ENCODE measurements at regions of chr13 and their contacts with region 1.

Region 1: GRCh38 chr13:77492982-77493381 is 42.5 kb upstream of the SCEL start:
- DNase-seq: no peak
- H3K4me3 ChIP-seq: no peak overlapping the region
- H3K27ac ChIP-seq: no peak overlapping the region
- H3K4me1 ChIP-seq: peaks cover 0 to 7% (median 6%) of the 10 kb centered on the region in 3 donors
- H3K27me3 ChIP-seq: no peaks in the 10 kb centered on the region
- CTCF ChIP-seq: peak in 5 of 6 experiments; percentile 45 to 76 (median 48)
- POLR2A ChIP-seq: no peak

Region 2: DNA sequence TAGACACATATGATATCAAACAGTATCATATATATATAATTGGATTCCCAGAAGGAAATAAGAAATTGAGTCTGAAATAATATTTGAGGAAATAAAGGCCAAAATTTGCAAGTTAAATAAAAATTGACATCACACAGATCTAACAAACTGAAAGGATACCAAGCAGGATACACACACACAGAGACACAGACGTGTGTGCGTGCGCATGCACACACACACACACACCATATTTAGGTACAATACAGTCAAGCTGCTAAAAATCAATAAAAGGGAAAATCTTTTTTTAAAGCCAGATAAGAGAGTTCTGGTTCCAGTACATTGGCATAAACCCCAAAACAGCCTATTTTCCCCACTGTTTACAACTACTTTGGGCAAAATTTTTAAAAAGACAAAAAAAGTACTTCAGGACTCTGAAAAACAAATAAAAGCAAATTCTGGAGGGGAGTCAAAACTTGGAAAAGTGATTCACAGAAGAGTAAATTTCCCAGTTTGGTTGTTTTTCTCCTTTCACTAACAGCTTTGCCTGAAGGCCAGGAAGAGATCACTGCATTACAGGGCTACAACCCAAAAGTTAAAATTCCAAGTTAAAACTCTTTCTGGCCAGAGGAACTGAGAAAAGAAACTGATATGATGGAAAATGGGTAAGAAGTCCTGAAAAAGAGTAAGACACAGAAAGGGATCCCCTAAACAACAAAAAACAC is 182.3 kb before region 1 on chr13:
- intact Hi-C with region 1: no loop called
- DNase-seq: no peak
- H3K4me3 ChIP-seq: no peak overlapping the region
- H3K27ac ChIP-seq: peak overlapping the region in 2 of 4 donors; percentile 35 to 36
- H3K4me1 ChIP-seq: peaks cover 5 to 86% (median 24%) of the 10 kb centered on the region in 3 donors
- H3K27me3 ChIP-seq: no peaks in the 10 kb centered on the region
- CTCF ChIP-seq: no peak
- POLR2A ChIP-seq: no peak

Region 3: DNA sequence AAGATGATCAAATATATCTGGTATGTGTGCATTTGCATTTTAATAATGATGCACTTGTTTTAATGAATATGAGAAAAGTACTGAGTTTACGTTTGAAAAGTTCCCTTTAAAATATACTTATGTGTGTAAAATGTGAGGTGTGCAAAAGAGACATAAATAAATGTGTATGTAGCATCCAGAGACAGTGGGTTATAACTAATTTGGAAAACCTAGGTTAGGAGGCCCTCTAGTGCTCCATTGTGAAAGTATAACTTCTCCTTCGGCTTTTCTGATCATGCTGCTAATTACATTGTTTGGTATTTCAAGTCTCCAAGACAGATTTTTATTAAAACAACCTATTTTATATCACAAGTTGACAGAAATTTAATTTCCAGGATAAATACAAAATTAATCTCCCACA is 72.7 kb after region 1 on chr13:
- intact Hi-C with region 1: loop called (anchors 10 kb)
- DNase-seq: no peak
- H3K4me3 ChIP-seq: no peak overlapping the region
- H3K27ac ChIP-seq: no peak overlapping the region
- H3K4me1 ChIP-seq: no peaks in the 10 kb centered on the region
- H3K27me3 ChIP-seq: no peaks in the 10 kb centered on the region
- CTCF ChIP-seq: peak in 5 of 6 experiments; percentile 30 to 54 (median 39)
- POLR2A ChIP-seq: no peak

Region 4: GRCh38 chr13:77749344-77749880 is 256.4 kb after region 1 on chr13:
- intact Hi-C with region 1: loop called (anchors 5 kb)
- DNase-seq: no peak
- H3K4me3 ChIP-seq: no peak overlapping the region
- H3K27ac ChIP-seq: no peak overlapping the region
- H3K4me1 ChIP-seq: no peaks in the 10 kb centered on the region
- H3K27me3 ChIP-seq: no peaks in the 10 kb centered on the region
- CTCF ChIP-seq: no peak
- POLR2A ChIP-seq: no peak

Measured in esophagus squamous epithelium (tissue), 5 donors.